Ascending aorta (tissue), 2 donors: ENCODE measurements at regions of chr22 and their contacts with region 1.

Region 1: GRCh38 chr22:20965104-20965887 is 1.8 kb upstream of the AIFM3 start:
- DNase-seq: no peak
- H3K4me3 ChIP-seq: peak overlapping the region; percentile 28 to 61
- H3K27ac ChIP-seq: no peak overlapping the region
- H3K4me1 ChIP-seq: peaks cover 0 to 3% of the 10 kb centered on the region in 2 donors
- H3K27me3 ChIP-seq: peaks cover 12% of the 10 kb centered on the region
- CTCF ChIP-seq: no peak

Region 2: DNA sequence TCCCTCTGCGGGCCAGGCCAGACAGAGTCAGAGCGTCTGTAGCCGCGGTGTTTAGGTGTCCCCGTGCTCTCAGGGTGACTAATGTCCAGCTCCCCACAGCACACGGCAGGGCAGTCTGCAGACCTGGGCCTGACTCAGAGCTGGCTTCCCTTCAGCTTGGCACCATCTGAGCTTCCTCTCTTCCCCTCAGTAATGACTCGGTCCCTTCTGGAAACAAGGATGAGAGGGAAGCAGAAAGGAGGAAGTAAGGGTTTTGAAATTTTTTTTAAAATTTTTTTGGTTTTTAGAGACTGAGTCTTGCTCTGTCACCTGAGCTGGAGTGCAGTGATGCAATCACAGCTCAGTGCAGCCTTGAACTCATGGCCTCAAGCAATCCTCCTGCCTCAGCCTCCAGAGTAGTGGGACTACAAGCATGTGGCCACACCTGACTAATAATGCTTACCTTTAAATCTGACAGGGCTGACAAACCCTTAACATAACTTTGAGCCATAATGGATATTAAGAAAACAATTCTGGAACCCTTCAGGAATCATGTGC is 109.0 kb after region 1 on chr22:
- intact Hi-C with region 1: loop called (anchors 10 kb)
- DNase-seq: peak in 1 of 2 donors; percentile 11
- H3K4me3 ChIP-seq: no peak overlapping the region
- H3K27ac ChIP-seq: no peak overlapping the region
- H3K4me1 ChIP-seq: no peaks in the 10 kb centered on the region
- H3K27me3 ChIP-seq: no peaks in the 10 kb centered on the region
- CTCF ChIP-seq: no peak